ENCODE measurements at regions of chr10 and their contacts with region 1.

Region 1: GRCh38 chr10:52488606-52489485 is 174.8 kb downstream of the DKK1 start:
- DNase-seq: peak in 1 of 2 experiments; percentile 69
- H3K4me3 ChIP-seq: no peak overlapping the region
- H3K4me3 Mint-ChIP-seq: no peak overlapping the region
- H3K27ac Mint-ChIP-seq: peak overlapping the region; percentile 45
- H3K4me1 ChIP-seq: peaks cover 27% of the 10 kb centered on the region
- H3K4me1 Mint-ChIP-seq: peaks cover 28% of the 10 kb centered on the region
- H3K27me3 ChIP-seq: no peaks in the 10 kb centered on the region
- H3K27me3 Mint-ChIP-seq: no peaks in the 10 kb centered on the region
- CTCF ChIP-seq: peak; percentile 80 to 90

Region 2: GRCh38 chr10:52313933-52314816 is 174.7 kb before region 1 on chr10 and contains the start of gene DKK1:
- CTCF ChIA-PET with region 1: interaction called, 29 read pairs
- POLR2A ChIA-PET with region 1: interaction called, 8 read pairs
- intact Hi-C with region 1: loop called (anchors 1 kb)
- DNase-seq: peak; percentile 99 to 100
- H3K4me3 ChIP-seq: peak within 1 kb of the TSS; percentile 63
- H3K4me3 Mint-ChIP-seq: peak within 1 kb of the TSS; percentile 96
- H3K27ac Mint-ChIP-seq: peak within 1 kb of the TSS; percentile 95
- H3K4me1 ChIP-seq: peaks cover 40% of the 10 kb centered on the region
- H3K4me1 Mint-ChIP-seq: peaks cover 33% of the 10 kb centered on the region
- H3K27me3 ChIP-seq: no peaks in the 10 kb centered on the region
- H3K27me3 Mint-ChIP-seq: no peaks in the 10 kb centered on the region
- CTCF ChIP-seq: peak; percentile 99
- total RNA-seq, gene DKK1: 1,709 and 1,866 TPM in 2 replicates

Region 3: GRCh38 chr10:52368741-52369140 is 120.1 kb before region 1 on chr10:
- CTCF ChIA-PET with region 1: no interaction called
- POLR2A ChIA-PET with region 1: no interaction called
- intact Hi-C with region 1: loop called (anchors 2 kb)
- DNase-seq: no peak
- H3K4me3 ChIP-seq: no peak overlapping the region
- H3K4me3 Mint-ChIP-seq: no peak overlapping the region
- H3K27ac Mint-ChIP-seq: no peak overlapping the region
- H3K4me1 ChIP-seq: peaks cover 24% of the 10 kb centered on the region
- H3K4me1 Mint-ChIP-seq: peaks cover 27% of the 10 kb centered on the region
- H3K27me3 ChIP-seq: no peaks in the 10 kb centered on the region
- H3K27me3 Mint-ChIP-seq: no peaks in the 10 kb centered on the region
- CTCF ChIP-seq: peak in 1 of 2 experiments; percentile 18

Region 4: DNA sequence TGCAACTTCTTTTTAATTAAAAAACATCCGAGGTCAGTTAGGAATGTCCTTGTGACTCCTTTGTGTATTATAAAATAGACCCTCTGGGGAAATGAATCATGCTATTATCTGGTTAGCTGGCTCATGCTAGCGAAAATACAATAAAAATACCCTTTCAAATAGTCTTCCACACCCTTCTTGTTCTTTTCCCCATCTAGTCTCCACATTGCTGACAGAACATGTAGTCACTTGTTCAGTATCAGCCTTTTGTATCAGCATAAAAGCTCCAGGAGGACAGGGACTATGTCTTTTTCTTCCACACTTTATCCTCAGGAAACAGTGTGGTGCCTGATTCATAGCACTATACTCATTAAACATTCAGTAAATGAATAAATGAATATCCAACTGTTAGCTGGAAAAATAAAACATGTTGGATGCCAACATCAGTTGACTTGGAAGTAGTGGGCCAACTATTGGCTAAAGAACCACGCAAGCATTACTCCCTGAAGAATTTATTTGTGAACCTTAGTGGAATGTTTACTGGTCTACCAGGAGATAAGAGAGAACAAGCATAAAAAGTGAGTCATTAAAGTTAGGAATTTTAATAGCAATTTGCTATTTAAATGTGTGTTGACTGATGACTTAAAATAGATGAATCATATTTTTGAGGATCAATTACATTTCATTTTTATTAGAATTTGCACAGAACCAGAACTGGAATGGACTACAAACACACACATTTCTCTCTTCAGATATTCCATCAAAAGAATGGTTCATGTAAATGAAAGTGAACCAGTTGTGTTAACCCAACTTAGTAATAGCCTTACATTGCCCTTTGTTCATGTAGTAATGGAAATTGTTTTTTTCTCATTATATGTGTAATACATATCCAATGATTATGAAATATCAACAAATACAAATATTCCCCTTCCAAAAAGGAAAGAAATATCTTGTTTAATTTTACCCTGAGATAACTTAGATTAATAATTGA is 45.1 kb before region 1 on chr10:
- CTCF ChIA-PET with region 1: no interaction called
- POLR2A ChIA-PET with region 1: no interaction called
- intact Hi-C with region 1: loop called (anchors 2 kb)
- DNase-seq: peak in 1 of 2 experiments; percentile 71
- H3K4me3 ChIP-seq: no peak overlapping the region
- H3K4me3 Mint-ChIP-seq: peak overlapping the region; percentile 29
- H3K27ac Mint-ChIP-seq: peak overlapping the region; percentile 83
- H3K4me1 ChIP-seq: peaks cover 57% of the 10 kb centered on the region
- H3K4me1 Mint-ChIP-seq: peaks cover 39% of the 10 kb centered on the region
- H3K27me3 ChIP-seq: no peaks in the 10 kb centered on the region
- H3K27me3 Mint-ChIP-seq: no peaks in the 10 kb centered on the region
- CTCF ChIP-seq: no peak

Region 5: GRCh38 chr10:52566471-52567246 is 77.8 kb after region 1 on chr10:
- CTCF ChIA-PET with region 1: interaction called, 5 read pairs
- POLR2A ChIA-PET with region 1: no interaction called
- intact Hi-C with region 1: loop called (anchors 1 kb)
- DNase-seq: peak in 1 of 2 experiments; percentile 65
- H3K4me3 ChIP-seq: no peak overlapping the region
- H3K4me3 Mint-ChIP-seq: no peak overlapping the region
- H3K27ac Mint-ChIP-seq: no peak overlapping the region
- H3K4me1 ChIP-seq: peaks cover 5% of the 10 kb centered on the region
- H3K4me1 Mint-ChIP-seq: no peaks in the 10 kb centered on the region
- H3K27me3 ChIP-seq: no peaks in the 10 kb centered on the region; the same call in 1 of the 2 replicates
- H3K27me3 Mint-ChIP-seq: no peaks in the 10 kb centered on the region
- CTCF ChIP-seq: peak; percentile 78 to 83